ENCODE measurements at regions of chr1 and their contacts with region 1.

Region 1: DNA sequence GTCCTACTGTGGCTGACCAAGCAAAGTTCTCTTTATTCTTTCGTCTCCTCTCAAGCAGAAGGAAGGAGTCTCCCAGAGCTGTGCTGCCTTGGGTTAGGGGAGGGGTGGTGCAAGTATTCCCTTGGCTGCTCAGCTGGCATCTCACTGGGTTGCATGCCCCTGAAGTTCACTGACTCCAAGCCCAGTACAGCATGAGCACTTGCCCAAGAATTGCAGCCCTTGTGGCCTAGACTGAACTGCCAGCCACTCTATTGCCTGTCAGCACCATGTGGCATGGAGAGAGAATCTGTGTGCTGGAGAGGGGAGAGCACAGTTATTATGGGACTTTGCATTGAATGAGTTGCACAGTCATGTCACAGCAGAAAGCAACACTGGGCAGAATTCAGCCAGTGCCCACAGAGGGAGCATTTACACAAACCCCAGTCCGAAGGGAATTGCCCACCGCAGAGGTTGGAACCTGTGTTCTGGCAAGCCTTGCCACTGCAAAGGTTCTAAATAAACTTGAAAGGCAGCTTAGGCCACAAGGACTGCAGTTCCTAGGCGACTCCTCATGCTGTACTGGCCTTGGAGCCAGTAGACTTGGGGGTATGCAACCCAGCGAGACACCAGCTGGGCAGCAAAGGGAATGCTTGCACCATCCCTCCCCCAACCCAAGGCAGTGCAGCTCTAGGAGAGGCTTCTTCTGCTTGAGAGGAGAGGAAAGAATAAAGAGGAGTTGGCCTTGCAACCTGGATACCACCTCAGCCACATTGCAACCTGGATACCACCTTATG is 28.8 kb downstream of the DR1 start:
- H3K4me3 Mint-ChIP-seq: no peak overlapping the region
- H3K27ac Mint-ChIP-seq: no peak overlapping the region
- H3K4me1 Mint-ChIP-seq: no peaks in the 10 kb centered on the region
- H3K27me3 Mint-ChIP-seq: no peaks in the 10 kb centered on the region

Region 2: GRCh38 chr1:93338421-93338820 is 36.1 kb before region 1 on chr1:
- intact Hi-C with region 1: loop called (anchors 5 kb)
- H3K4me3 Mint-ChIP-seq: no peak overlapping the region
- H3K27ac Mint-ChIP-seq: no peak overlapping the region
- H3K4me1 Mint-ChIP-seq: peaks cover 13% of the 10 kb centered on the region
- H3K27me3 Mint-ChIP-seq: no peaks in the 10 kb centered on the region